HCT116 (cell line): ENCODE measurements at regions of chr2 and their contacts with region 1.

Region 1: GRCh38 chr2:54149638-54150441 is 34.4 kb downstream of the ACYP2 start:
- DNase-seq: no peak
- ATAC-seq: no peak
- H3K4me3 ChIP-seq: no peak overlapping the region
- H3K27ac ChIP-seq: no peak overlapping the region
- H3K4me1 ChIP-seq: no peaks in the 10 kb centered on the region
- H3K27me3 ChIP-seq: no peaks in the 10 kb centered on the region
- CTCF ChIP-seq: no peak
- POLR2A ChIP-seq: no peak
- RAD21 ChIP-seq: no peak

Region 2: DNA sequence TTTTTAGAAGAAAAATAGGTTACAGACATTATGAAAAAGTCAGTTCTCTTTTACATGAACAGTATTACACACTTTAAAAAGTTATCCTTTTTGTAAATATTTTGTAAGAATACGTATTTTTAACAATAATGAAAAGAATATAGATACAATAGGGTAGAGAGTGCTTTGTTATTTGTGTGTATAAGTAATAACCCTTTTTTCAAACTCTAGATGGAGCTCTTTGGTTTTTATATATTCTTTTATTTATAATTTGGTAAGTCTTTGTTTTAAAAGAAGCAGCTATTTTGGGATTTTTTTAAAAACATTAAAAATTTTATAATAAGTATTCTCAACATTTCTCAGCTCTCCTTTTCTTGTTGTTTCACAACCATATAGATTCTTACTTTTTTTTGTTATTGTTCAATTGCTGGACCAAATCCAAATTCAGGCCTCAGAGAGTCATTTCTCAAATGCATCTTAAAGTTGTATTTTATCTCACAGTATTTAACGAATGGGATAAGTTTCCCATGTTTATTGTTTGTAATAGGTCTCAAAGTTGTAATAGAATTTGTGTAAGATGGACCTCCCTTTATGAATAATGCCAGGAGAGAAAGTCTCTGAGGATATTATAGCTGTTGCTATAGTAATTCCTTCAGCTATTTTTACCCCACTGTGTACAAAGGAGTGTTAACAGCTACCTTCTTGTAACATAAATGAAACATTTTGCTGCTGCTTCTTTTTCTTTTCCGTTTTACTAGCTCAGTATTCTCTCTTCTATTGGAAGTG is 12.0 kb after region 1 on chr2:
- CTCF ChIA-PET with region 1: interaction called, 11 read pairs
- POLR2A ChIA-PET with region 1: no interaction called
- RAD21 ChIA-PET with region 1: no interaction called
- intact Hi-C with region 1: no loop called
- DNase-seq: no peak
- ATAC-seq: no peak
- H3K4me3 ChIP-seq: no peak overlapping the region
- H3K27ac ChIP-seq: no peak overlapping the region
- H3K4me1 ChIP-seq: no peaks in the 10 kb centered on the region
- H3K27me3 ChIP-seq: no peaks in the 10 kb centered on the region
- CTCF ChIP-seq: peak in 1 of 3 experiments; percentile 12; a peak in 1 of 6 replicates
- POLR2A ChIP-seq: no peak
- RAD21 ChIP-seq: no peak